Activated CD4-positive, alpha-beta memory T cell treated with anti-CD3 and anti-CD28 coated beads for 36 hours (primary cell): ENCODE measurements at regions of chrX and their contacts with region 1.

Region 1: GRCh38 chrX:71181910-71182799 is 37.5 kb downstream of the NLGN3 start:
- DNase-seq: peak; percentile 89
- H3K4me3 Mint-ChIP-seq: peak overlapping the region; percentile 86
- H3K27ac Mint-ChIP-seq: peak overlapping the region; percentile 99
- H3K4me1 Mint-ChIP-seq: peaks cover 12% of the 10 kb centered on the region
- H3K27me3 Mint-ChIP-seq: no peaks in the 10 kb centered on the region

Region 2: DNA sequence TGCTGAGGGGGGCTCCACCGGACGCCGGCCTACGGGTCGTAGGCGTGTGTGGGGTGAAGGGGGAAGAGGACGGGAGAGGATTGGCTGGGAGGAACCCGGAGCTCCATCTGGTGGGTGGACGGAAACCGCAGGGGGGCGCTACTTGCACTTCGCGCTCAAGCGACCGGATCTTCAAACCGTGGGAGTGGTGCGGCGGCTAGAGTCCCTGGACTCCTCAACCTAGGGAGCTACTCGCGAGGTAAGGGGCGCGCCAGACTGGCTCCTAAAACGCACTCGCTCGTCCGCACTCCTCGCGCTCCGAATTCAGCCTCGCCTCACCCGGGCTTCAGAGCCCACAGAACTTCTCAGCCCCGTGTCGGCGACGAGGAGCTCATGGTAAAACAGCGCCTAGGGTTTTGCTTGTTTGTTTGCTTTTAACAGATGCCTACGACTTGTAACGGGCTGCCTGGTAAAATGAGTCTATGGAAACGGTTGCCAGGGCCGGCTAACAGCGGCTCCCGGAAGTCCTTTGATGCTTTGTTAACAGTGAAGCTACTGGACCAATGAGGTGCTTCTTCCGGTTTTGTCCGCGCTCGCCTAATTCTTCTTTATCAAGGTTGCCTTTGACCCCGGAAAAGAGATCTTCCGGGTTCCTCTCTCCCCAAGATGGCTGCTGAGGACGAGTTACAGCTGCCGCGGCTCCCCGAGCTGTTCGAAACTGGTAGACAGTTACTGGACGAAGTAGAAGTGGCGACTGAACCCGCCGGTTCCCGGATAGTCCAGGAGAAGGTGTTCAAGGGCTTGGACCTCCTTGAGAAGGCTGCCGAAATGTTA is 1048.6 kb before region 1 on chrX and contains the start of gene IGBP1:
- CTCF ChIA-PET with region 1: no interaction called
- POLR2A ChIA-PET with region 1: no interaction called
- intact Hi-C with region 1: loop called (anchors 10 kb)
- DNase-seq: peak; percentile 85
- H3K4me3 Mint-ChIP-seq: peak within 1 kb of the TSS; percentile 98
- H3K27ac Mint-ChIP-seq: peak within 1 kb of the TSS; percentile 96
- H3K4me1 Mint-ChIP-seq: peaks cover 24% of the 10 kb centered on the region
- H3K27me3 Mint-ChIP-seq: no peaks in the 10 kb centered on the region
- total RNA-seq, gene IGBP1: 50.8 to 51.5 TPM

Region 3: DNA sequence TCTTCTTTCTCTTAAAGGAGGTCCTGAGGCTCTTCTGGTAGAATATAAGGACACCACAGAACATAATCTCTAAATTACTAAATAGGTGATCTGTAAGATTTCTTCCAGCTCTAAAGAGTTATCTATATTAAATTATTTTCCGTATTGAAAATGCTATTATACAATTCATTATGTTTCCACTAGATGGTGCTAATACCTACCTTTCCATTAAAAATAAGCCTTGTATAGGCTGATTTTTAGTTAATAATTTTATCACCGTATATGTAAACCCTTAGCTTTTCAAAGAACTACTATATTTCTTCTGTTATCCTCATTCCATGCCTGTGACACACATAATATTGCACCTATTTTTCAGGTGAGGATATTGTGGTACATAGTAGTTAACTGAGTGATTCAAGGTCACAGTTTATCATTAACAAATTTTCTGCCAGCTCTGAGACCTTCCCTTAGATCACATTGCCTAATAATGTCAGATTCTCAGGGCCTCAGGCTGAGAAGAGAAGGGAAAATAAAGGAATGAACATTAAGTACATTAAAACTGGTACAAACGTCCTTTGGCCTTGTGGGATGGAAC is 412.4 kb before region 1 on chrX:
- CTCF ChIA-PET with region 1: interaction called, 12 read pairs
- POLR2A ChIA-PET with region 1: no interaction called
- intact Hi-C with region 1: no loop called
- DNase-seq: no peak
- H3K4me3 Mint-ChIP-seq: no peak overlapping the region
- H3K27ac Mint-ChIP-seq: no peak overlapping the region
- H3K4me1 Mint-ChIP-seq: no peaks in the 10 kb centered on the region
- H3K27me3 Mint-ChIP-seq: no peaks in the 10 kb centered on the region

Region 4: GRCh38 chrX:70978928-70979762 is 203.0 kb before region 1 on chrX:
- CTCF ChIA-PET with region 1: no interaction called
- POLR2A ChIA-PET with region 1: no interaction called
- intact Hi-C with region 1: no loop called
- DNase-seq: no peak
- H3K4me3 Mint-ChIP-seq: no peak overlapping the region
- H3K27ac Mint-ChIP-seq: no peak overlapping the region
- H3K4me1 Mint-ChIP-seq: no peaks in the 10 kb centered on the region
- H3K27me3 Mint-ChIP-seq: no peaks in the 10 kb centered on the region

Region 5: DNA sequence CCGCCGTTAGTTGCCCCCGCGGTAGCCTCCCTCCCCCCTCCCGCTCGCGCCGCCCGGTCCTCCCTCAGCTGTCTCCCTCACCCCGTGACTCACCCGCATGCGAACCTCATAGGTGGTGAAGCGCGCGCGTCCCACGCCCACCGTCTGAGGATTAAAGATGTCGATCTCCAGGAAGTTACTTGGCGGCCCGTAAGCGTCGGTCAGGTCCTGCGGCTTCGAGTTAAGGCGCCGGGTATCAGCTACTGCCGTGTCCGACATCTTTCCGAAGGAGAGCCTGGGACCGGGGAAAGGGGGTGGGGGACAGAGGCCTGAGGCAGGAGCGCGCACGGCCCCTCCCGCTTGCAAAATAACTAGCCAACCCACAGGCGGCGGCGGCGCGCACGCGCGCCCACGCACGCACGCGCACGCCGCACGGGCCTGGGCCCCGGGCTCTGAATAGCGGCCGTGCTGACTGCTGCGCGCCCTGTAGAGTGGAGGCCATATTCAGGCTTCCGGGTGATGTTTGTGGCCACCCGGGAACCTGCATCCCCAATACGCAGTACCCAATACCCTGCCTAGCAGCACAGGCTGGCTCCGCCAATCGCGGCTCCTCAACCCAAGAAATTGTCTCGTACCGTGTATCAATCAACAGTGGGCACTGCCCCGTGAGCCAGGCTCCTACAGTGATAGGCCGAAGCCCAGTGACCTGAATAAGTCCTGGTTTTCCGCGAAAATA is 113.9 kb before region 1 on chrX and contains the start of gene SNX12:
- CTCF ChIA-PET with region 1: no interaction called
- POLR2A ChIA-PET with region 1: no interaction called
- intact Hi-C with region 1: loop called (anchors 1 kb)
- DNase-seq: peak; percentile 94
- H3K4me3 Mint-ChIP-seq: peak within 1 kb of the TSS; percentile 95
- H3K27ac Mint-ChIP-seq: peak within 1 kb of the TSS; percentile 97
- H3K4me1 Mint-ChIP-seq: peaks cover 18% of the 10 kb centered on the region
- H3K27me3 Mint-ChIP-seq: no peaks in the 10 kb centered on the region
- total RNA-seq, gene SNX12: 42.1 to 42.5 TPM

Region 6: GRCh38 chrX:71111141-71111843 is 70.9 kb before region 1 on chrX and contains the start of gene IL2RG:
- CTCF ChIA-PET with region 1: interaction called, 4 read pairs
- POLR2A ChIA-PET with region 1: interaction called, 5 read pairs
- intact Hi-C with region 1: loop called (anchors 5 kb)
- DNase-seq: peak; percentile 85
- H3K4me3 Mint-ChIP-seq: peak within 1 kb of the TSS; percentile 99
- H3K27ac Mint-ChIP-seq: peak within 1 kb of the TSS; percentile 98
- H3K4me1 Mint-ChIP-seq: peaks cover 38% of the 10 kb centered on the region
- H3K27me3 Mint-ChIP-seq: no peaks in the 10 kb centered on the region
- total RNA-seq, gene IL2RG: 289 to 290 TPM

Region 7: GRCh38 chrX:71254092-71254941 is 72.2 kb after region 1 on chrX and contains the start of gene ZMYM3:
- CTCF ChIA-PET with region 1: interaction called, 4 read pairs
- POLR2A ChIA-PET with region 1: interaction called, 5 read pairs
- intact Hi-C with region 1: loop called (anchors 5 kb)
- DNase-seq: peak; percentile 84
- H3K4me3 Mint-ChIP-seq: peak within 1 kb of the TSS; percentile 86
- H3K27ac Mint-ChIP-seq: peak within 1 kb of the TSS; percentile 73
- H3K4me1 Mint-ChIP-seq: peaks cover 25% of the 10 kb centered on the region
- H3K27me3 Mint-ChIP-seq: no peaks in the 10 kb centered on the region
- total RNA-seq, gene ZMYM3: 17.2 to 17.5 TPM

Region 8: GRCh38 chrX:71365876-71366673 is 183.9 kb after region 1 on chrX and contains the start of gene TAF1:
- CTCF ChIA-PET with region 1: interaction called, 3 read pairs
- POLR2A ChIA-PET with region 1: interaction called, 8 read pairs
- intact Hi-C with region 1: loop called (anchors 5 kb)
- DNase-seq: peak; percentile 95
- H3K4me3 Mint-ChIP-seq: peak within 1 kb of the TSS; percentile 91
- H3K27ac Mint-ChIP-seq: peak within 1 kb of the TSS; percentile 99
- H3K4me1 Mint-ChIP-seq: peaks cover 17% of the 10 kb centered on the region
- H3K27me3 Mint-ChIP-seq: no peaks in the 10 kb centered on the region
- total RNA-seq, gene TAF1: 24.3 to 26.3 TPM